Head of caudate nucleus (tissue), 42 donors: ENCODE measurements at regions of chr14 and their contacts with region 1.

Region 1: DNA sequence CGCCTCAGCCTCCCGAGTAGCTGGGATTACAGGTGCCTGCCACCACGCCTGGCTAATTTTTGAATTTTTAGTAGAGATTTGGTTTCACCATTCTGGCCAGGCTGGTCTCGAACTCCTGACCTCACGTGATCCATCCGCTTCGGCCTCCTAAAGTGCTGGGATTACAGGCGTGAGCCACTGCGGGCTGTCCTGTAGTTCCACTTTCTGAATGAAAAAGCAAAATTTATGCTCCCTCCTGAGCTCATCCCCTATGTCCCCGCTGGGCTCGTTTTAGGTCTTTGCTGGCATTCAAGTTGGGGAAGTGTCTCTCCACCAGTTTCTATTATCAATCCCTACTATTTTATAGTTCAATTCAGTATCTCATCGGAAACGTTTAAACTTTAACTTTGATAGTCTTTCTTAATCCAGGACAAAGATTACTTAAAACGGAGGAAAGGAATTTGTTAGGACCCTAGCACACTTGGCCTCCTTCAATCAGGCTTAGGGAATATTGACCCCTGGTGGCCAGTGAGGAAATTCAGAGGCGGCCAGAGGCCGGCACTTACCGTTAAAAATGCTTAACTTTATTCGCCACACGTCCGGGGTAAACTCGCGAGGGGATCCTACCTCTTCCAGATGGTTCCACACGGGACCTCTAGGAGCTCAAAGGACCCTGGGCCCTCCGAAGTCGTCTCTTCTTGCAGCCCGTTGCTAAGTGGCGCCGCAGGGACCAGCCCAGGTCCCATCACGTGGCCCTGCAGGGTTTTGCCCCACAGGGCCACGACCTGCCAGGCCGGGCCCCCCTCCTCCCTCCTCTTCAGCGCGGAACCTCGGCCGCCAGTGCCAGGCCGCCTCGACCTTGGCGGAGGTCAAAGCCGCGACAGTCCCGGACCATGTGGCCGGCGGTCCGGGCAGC is 11.4 kb upstream of the DNAL1 start:
- DNase-seq: peak; percentile 38 to 87 (median 66)

Region 2: GRCh38 chr14:73503648-73504047 is 129.7 kb before region 1 on chr14:
- intact Hi-C with region 1: loop called (anchors 5 kb)
- DNase-seq: no peak